ENCODE measurements at regions of chr3 and their contacts with region 1.

Region 1: GRCh38 chr3:56801662-56802377 is at the start of gene ARHGEF3:
- DNase-seq: no peak
- H3K4me3 ChIP-seq: peak within 1 kb of the TSS; percentile 72 to 76
- H3K27ac ChIP-seq: peak within 1 kb of the TSS; percentile 70
- H3K4me1 ChIP-seq: peaks cover 46% of the 10 kb centered on the region
- H3K27me3 ChIP-seq: no peaks in the 10 kb centered on the region
- CTCF ChIP-seq: peak in 1 of 3 experiments; percentile 45
- POLR2A ChIP-seq: peak in 1 of 2 donors; percentile 67
- total RNA-seq, gene ARHGEF3: 17.4 TPM

Region 2: DNA sequence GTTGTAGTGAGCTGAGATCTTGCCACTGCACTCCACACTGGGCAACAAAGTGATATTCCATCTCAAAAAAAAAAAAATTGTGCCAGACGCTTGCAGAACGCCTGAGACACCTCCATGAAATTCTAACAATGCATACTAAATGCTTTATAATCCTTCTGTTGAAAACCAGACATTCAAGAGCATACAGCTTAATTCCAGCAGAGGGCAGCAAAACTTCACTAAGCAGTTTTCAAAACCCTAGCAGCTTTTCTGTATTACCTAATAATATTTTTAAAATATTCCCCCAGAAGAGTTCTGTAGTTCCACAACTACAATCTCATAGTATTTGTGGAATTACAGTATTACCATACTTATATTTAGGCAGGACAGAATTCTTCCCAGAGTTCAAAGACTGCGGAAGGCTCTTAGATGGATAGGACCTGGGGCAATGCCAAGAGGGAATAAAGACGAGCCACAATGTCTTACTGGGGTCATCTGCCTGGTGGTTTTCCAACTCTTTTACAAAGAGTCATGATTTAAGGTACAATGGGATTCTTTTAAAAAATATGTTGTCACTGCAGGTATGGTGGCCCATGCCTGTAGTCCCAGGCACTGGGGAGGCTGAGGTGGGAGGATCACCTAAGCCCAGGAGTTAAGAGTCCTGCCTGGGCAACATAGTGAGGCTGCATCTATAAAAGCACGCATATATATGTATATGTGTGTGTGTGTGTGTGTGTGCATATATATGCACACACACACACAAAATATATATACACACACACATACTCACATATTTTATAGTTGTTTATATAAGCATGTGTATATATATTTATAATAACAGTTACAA is 99.1 kb before region 1 on chr3:
- intact Hi-C with region 1: loop called (anchors 2 kb)
- DNase-seq: no peak
- H3K4me3 ChIP-seq: no peak overlapping the region
- H3K27ac ChIP-seq: no peak overlapping the region
- H3K4me1 ChIP-seq: no peaks in the 10 kb centered on the region
- H3K27me3 ChIP-seq: no peaks in the 10 kb centered on the region
- CTCF ChIP-seq: peak; percentile 89 to 90 (median 90)
- POLR2A ChIP-seq: no peak